AG04449 (cell line): ENCODE measurements at regions of chr7 and their contacts with region 1.

Region 1: GRCh38 chr7:155769701-155770100 is 42.6 kb downstream of the SHH start:
- DNase-seq: peak; percentile 73
- H3K4me3 ChIP-seq: no peak overlapping the region
- CTCF ChIP-seq: no peak

Region 2: GRCh38 chr7:155380221-155380861 is 389.4 kb before region 1 on chr7:
- CTCF ChIA-PET with region 1: interaction called, 10 read pairs
- POLR2A ChIA-PET with region 1: no interaction called
- DNase-seq: no peak
- H3K4me3 ChIP-seq: no peak overlapping the region
- CTCF ChIP-seq: peak; percentile 81

Region 3: DNA sequence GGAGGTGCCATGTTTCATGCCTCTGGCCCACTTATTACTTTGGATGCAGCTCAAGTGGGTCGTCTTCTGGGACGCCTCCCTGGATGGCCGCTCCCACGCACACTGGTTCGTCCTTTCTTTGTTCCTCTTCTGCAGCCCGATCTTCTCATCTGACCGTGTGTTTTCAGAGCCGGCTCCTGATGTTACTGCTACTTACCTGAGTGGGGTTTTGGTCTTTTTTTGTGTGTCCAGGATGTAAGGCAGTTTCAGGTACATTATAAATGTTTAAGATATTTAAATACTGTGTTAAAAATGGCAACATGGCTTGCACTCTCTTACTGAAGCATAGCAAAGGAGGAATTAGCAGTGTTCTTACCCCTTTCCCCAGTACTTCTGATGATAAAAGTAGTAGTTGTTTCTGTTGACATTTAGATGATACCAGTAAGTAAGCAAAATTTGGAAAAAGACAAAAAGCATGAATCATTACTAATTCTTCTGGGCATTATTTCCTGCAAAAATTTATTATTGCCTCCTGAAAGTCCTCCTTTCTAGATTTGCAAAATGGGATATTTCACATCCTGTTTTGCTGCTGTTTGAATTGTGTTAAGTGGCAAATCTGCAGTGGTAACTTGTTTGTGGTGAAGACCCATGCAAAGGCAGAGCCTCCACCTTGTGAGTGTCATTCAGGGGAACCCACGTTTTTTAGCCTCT is 16.8 kb before region 1 on chr7:
- CTCF ChIA-PET with region 1: interaction called, 14 read pairs
- POLR2A ChIA-PET with region 1: no interaction called
- DNase-seq: no peak
- H3K4me3 ChIP-seq: no peak overlapping the region
- CTCF ChIP-seq: no peak